IMR-90 (cell line): ENCODE measurements at regions of chr1 and their contacts with region 1.

Region 1: GRCh38 chr1:42173155-42173933 is 8.8 kb upstream of the GUCA2A start:
- DNase-seq: peak; percentile 28
- ATAC-seq: peak; percentile 76
- H3K4me3 ChIP-seq: no peak overlapping the region
- H3K27ac ChIP-seq: no peak overlapping the region
- H3K4me1 ChIP-seq: peaks cover 5% of the 10 kb centered on the region
- H3K27me3 ChIP-seq: no peaks in the 10 kb centered on the region
- CTCF ChIP-seq: peak; percentile 79
- POLR2A ChIP-seq: no peak
- RAD21 ChIP-seq: peak; percentile 61

Region 2: DNA sequence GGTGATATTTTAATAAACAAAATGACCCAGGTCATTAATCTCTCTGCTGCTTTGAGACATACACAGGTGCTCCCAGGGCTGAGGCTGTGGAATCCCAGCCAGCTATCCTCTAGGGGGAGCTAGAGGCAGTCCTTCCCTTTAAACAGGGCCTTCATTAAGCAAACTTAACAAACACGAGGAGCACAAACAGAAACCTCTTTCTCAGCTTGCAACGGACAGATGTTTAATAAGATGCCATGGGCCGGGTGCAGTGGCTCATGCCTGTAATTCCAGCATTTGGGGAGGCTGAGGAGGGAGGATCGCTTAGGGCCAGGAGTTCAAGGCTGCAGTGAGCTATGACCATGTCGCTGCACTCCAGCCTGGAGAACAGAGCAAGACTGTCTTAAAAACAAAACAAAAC is 361.3 kb before region 1 on chr1:
- CTCF ChIA-PET with region 1: interaction called, 3 read pairs
- POLR2A ChIA-PET with region 1: no interaction called
- dilution Hi-C with region 1: no loop called
- in situ Hi-C with region 1: no loop called
- intact Hi-C with region 1: loop called (anchors 2 kb)
- DNase-seq: peak; percentile 78
- ATAC-seq: peak; percentile 80
- H3K4me3 ChIP-seq: no peak overlapping the region
- H3K27ac ChIP-seq: peak overlapping the region; percentile 96
- H3K4me1 ChIP-seq: peaks cover 10% of the 10 kb centered on the region
- H3K27me3 ChIP-seq: no peaks in the 10 kb centered on the region
- CTCF ChIP-seq: peak; percentile 71
- POLR2A ChIP-seq: no peak
- RAD21 ChIP-seq: peak; percentile 81

Region 3: DNA sequence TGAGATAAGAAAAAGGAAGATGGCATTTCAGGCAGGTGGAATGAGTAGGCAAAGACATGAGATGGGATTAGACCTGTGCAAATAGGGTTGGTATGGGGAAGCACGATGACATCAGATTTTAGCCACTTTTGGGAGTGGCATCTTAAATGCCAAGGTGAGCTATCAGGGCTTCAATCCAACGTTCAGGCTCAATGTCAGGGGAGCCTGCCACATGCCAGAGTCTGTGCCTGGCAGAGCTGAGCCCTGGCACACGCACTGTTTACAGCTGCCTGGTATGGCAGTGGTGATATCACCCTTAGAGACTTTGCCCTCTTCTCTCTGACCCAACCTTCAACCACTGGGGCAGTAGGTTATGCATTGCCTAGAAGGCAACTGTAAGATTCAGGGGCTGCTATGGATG is 21.2 kb before region 1 on chr1:
- CTCF ChIA-PET with region 1: no interaction called
- POLR2A ChIA-PET with region 1: no interaction called
- dilution Hi-C with region 1: no loop called
- in situ Hi-C with region 1: no loop called
- intact Hi-C with region 1: no loop called
- DNase-seq: no peak
- ATAC-seq: no peak
- H3K4me3 ChIP-seq: no peak overlapping the region
- H3K27ac ChIP-seq: no peak overlapping the region
- H3K4me1 ChIP-seq: no peaks in the 10 kb centered on the region
- H3K27me3 ChIP-seq: peaks cover 39% of the 10 kb centered on the region
- CTCF ChIP-seq: no peak
- POLR2A ChIP-seq: no peak
- RAD21 ChIP-seq: no peak

Region 4: GRCh38 chr1:42456010-42456758 is 282.8 kb after region 1 on chr1 and contains the starts of genes PPCS and ZMYND12:
- CTCF ChIA-PET with region 1: no interaction called
- POLR2A ChIA-PET with region 1: no interaction called
- dilution Hi-C with region 1: no loop called
- in situ Hi-C with region 1: no loop called
- intact Hi-C with region 1: loop called (anchors 2 kb)
- DNase-seq: peak; percentile 76
- ATAC-seq: peak; percentile 93
- H3K4me3 ChIP-seq: peak within 1 kb of the TSS; percentile 68
- H3K27ac ChIP-seq: peak within 1 kb of the TSS; percentile 68
- H3K4me1 ChIP-seq: peaks cover 5% of the 10 kb centered on the region
- H3K27me3 ChIP-seq: no peaks in the 10 kb centered on the region
- CTCF ChIP-seq: no peak
- POLR2A ChIP-seq: peak; percentile 67; the same call in 1 of the 2 replicates
- RAD21 ChIP-seq: no peak
- total RNA-seq, gene PPCS: 8.2 and 13.6 TPM in 2 replicates
- total RNA-seq, gene ZMYND12: under 0.01 TPM in 1 of 2 replicates, not detected in the other